ENCODE measurements at regions of chr1 and their contacts with region 1.

Region 1: DNA sequence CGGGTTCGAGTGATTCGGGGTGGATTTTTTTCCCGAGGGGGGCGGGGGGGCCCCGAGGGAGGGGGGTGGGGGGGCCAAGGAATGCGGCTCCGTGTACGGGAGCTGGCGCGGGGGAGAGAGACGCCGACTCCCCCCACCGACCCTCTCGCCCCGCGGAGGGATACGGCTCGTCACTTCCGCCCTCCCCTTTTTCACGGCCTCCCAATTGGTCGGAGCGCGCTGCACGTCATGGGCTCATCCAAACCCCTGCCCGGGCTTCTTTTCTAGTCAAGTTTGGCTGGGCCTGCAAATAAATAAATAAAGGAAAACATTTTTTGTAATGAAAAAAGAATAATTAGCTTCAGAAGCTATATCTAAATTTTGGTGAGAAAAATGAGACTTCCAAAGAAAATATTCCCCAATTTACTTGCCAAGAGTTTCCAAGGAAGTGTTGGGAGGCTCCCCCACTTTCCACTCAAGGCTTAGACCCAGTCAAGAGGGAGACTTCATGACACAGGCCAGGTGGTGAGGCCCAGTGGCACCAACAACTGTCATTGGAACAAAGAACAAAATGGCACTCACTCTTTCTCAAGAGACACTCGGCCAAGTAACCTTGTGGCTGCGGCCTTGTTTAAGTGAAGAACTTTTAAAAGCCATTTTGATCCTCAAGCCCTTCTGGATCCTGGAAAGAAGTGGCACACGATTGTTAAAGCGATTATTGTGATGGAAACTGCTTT is at the start of gene POGZ:
- DNase-seq: peak; percentile 93 to 99 (median 97)

Region 2: GRCh38 chr1:151472856-151473731 is 13.6 kb after region 1 on chr1:
- intact Hi-C with region 1: loop called (anchors 2 kb)
- DNase-seq: peak in 33 of 42 donors; percentile 7 to 67 (median 33)

Region 3: DNA sequence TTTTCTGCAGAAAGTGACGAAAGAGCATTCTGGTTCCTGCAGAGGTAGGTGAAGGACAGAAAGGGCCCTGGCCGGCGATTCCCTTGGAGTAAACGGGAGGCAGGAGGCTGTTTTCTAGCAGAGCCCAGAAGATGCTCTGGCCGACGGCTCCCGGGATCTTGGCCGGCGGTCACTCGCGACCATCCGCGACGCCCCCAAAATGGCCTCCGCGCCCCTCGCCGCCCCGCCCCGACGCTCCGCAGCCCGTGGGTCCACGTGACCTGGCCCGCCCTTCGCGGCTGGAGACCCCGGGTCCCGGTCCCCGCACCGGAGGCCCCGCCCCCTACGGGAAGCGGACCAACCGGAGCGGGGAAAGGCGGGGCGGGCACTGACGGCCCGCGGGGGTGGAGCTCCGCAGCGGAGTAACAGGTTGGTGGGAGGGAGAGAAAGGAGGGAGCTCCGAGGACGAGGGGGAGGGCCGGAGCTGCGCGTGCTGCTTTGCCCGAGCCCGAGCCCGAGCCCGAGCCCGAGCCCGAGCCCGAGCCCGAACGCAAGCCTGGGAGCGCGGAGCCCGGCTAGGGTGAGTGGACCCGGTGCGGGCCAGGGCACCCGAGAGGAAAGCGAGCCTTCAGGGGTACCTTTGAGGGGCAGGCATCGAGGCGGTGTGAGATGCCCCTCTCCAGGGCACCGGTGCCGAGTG is 51.6 kb after region 1 on chr1 and contains the start of gene CGN:
- intact Hi-C with region 1: loop called (anchors 5 kb)
- DNase-seq: peak; percentile 75 to 97 (median 94)

Region 4: GRCh38 chr1:151534665-151535278 is 75.3 kb after region 1 on chr1:
- intact Hi-C with region 1: loop called (anchors 5 kb)
- DNase-seq: peak; percentile 56 to 93 (median 84)

Region 5: DNA sequence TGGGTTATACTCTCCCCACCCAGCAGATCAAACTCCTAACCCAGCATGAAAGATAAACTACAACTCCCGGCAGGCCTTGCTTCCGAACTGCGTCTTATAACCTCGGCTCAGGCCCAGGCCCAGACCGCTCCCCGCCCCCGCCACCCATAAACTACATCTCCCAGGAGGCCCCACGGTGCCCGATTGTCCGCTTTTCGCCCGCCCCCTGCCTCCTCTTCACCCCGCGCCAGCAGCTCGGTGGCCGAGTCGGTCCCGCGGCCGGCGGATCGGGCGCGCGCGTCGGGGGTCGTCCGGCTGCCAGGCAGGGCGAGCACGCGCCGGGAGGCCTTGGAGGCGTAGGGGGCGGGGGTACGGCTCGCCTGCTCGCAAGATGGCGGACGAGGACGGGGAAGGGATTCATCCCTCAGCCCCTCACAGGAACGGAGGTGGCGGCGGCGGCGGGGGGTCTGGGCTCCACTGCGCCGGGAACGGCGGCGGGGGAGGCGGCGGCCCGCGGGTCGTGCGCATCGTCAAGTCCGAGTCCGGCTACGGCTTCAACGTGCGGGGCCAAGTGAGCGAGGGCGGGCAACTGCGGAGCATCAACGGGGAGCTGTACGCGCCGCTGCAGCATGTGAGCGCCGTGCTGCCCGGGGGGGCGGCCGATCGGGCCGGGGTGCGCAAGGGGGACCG is 152.5 kb after region 1 on chr1 and contains the start of gene SNX27:
- intact Hi-C with region 1: loop called (anchors 10 kb)
- DNase-seq: peak; percentile 85 to 98 (median 94)